OCI-LY7 (cell line): ENCODE measurements at regions of chr2 and their contacts with region 1.

Region 1: DNA sequence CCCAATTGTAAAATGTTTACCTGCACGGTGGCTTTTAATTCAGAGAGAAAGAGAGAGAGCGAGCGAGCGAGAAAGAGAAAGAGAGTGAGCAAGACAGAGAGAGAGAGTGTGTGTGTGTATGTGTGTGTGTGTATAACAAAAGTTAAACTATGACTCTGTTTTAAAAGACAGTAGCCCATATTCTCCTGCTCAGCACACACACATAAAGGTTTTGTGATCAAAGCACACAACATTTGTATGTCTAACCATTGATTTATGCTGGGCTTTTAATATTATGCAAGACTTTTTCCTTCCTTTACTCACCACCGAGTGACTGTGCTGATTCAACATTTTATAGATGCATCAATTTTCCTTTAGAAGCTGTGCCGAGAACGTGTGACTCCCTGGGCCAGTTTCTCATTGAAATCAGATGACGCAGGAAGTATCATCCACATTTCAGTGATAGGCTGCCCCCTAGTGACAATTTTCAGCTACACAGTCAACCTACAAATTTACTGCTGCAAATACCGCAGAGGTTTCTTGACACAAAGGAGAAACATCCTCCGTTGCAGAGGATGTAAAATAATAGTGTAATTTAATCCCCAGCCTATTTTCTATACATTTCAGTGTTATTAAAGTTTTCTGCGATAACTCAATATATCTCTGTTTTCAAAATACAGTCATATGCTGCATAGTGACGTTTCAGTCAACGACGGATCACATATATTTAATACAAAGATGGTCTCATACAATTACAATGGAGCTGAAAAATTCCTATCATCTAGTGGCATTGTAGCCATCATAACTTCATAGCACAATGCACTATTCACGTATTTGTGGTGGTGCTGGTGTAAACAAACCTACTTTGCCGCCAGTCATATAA is 165.9 kb upstream of the TANK start:
- DNase-seq: peak; percentile 64
- H3K4me3 ChIP-seq: no peak overlapping the region
- H3K27ac ChIP-seq: no peak overlapping the region
- H3K4me1 ChIP-seq: no peaks in the 10 kb centered on the region
- CTCF ChIP-seq: peak; percentile 95

Region 2: GRCh38 chr2:160252278-160252887 is 742.0 kb before region 1 on chr2:
- CTCF ChIA-PET with region 1: no interaction called
- POLR2A ChIA-PET with region 1: no interaction called
- intact Hi-C with region 1: loop called (anchors 1 kb)
- DNase-seq: peak; percentile 11
- H3K4me3 ChIP-seq: no peak overlapping the region
- H3K27ac ChIP-seq: no peak overlapping the region
- H3K4me1 ChIP-seq: no peaks in the 10 kb centered on the region
- CTCF ChIP-seq: peak; percentile 91

Region 3: DNA sequence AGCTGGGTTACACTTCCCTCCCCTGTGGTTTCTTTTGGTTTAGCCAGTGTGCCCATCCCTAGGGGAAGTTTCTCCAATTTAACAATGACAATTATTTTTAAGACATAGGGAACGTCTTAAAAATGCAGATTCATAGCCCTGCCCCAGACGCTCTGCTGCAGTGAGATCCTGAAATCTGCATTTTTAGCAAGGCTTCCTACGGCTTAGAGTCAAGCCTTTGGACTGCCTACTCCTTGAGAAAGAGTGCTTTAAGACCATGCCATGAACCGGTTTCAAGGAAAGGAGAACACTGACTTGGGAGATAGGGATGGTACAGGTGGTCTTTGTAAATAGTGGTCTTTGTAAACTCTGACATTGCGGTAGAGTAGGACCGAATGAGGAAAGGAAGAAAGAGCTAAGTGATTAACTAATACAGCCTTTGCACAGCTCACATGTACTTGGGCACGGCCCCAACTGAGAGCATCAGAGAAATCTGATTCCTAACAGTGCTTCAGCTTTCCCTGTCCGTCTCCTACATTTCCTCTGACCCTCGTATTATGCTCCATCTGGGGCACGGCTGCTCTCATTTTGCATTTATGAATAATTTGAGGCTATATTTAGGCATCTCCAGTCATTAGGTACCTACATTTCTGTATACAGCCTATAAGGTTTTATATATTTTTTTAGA is 51.8 kb before region 1 on chr2:
- CTCF ChIA-PET with region 1: no interaction called
- POLR2A ChIA-PET with region 1: no interaction called
- intact Hi-C with region 1: no loop called
- DNase-seq: no peak
- H3K4me3 ChIP-seq: no peak overlapping the region
- H3K27ac ChIP-seq: no peak overlapping the region
- H3K4me1 ChIP-seq: no peaks in the 10 kb centered on the region
- CTCF ChIP-seq: no peak